ENCODE measurements at regions of chr10 and their contacts with region 1.

Region 1: GRCh38 chr10:94545391-94546048 is at the start of gene HELLS:
- DNase-seq: peak; percentile 88
- H3K4me3 Mint-ChIP-seq: peak within 1 kb of the TSS; percentile 98
- H3K27ac Mint-ChIP-seq: peak within 1 kb of the TSS; percentile 93
- H3K4me1 Mint-ChIP-seq: peaks cover 21% of the 10 kb centered on the region
- H3K27me3 Mint-ChIP-seq: no peaks in the 10 kb centered on the region
- total RNA-seq, gene HELLS: 135 to 141 TPM

Region 2: DNA sequence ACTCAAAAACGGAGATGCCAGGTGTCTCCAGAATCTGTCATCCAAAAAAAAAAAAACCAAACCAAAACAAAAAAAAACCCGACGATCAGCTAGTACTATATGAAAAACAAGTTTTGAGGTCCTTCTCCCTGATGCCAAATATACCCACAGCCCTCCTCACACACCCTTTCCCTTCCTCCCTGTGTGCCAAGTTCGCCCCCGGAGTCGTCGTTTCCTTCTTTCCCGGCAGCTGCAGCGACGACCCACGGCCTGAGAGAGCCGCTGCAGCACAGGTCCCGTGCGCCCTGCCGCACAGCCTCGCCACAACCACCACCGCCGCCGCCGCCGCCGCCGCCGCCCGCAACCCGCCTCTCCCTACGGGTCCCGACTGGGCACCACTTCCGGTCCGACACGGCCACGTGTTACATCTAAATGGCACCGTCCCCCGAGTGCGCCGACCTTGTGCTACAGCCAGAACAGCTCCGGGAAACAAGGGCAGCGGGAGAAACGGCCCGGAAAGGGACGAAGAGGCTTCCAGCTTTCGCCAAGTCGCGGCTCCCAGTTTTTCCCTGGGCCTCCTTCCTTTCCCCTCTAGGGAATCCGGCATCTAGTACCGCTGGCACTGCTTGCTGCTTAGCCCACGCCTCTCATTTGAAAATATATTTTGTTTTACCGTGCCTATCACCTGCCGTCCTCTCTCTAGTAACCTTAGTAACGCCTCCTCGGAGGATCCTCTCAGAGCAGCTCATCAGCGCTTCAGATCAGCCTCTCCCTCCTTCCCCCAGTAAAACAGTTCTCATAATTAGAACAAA is 843.1 kb before region 1 on chr10 and contains the start of gene FRA10AC1:
- CTCF ChIA-PET with region 1: interaction called, 3 read pairs
- POLR2A ChIA-PET with region 1: no interaction called
- intact Hi-C with region 1: loop called (anchors 2 kb)
- DNase-seq: peak; percentile 92
- H3K4me3 Mint-ChIP-seq: no peak within 1 kb of the TSS
- H3K27ac Mint-ChIP-seq: no peak within 1 kb of the TSS
- H3K4me1 Mint-ChIP-seq: peaks cover 15% of the 10 kb centered on the region
- H3K27me3 Mint-ChIP-seq: no peaks in the 10 kb centered on the region
- total RNA-seq, gene FRA10AC1: 18.6 to 19.0 TPM

Region 3: GRCh38 chr10:94362360-94363250 is 182.9 kb before region 1 on chr10 and contains the start of gene NOC3L:
- CTCF ChIA-PET with region 1: interaction called, 6 read pairs
- POLR2A ChIA-PET with region 1: interaction called, 4 read pairs
- intact Hi-C with region 1: loop called (anchors 1 kb)
- DNase-seq: peak; percentile 96
- H3K4me3 Mint-ChIP-seq: peak within 1 kb of the TSS; percentile 88
- H3K27ac Mint-ChIP-seq: peak within 1 kb of the TSS; percentile 89
- H3K4me1 Mint-ChIP-seq: peaks cover 33% of the 10 kb centered on the region
- H3K27me3 Mint-ChIP-seq: peaks cover 6% of the 10 kb centered on the region
- total RNA-seq, gene NOC3L: 37.6 to 39.2 TPM

Region 4: GRCh38 chr10:94591461-94592205 is 46.1 kb after region 1 on chr10:
- CTCF ChIA-PET with region 1: no interaction called
- POLR2A ChIA-PET with region 1: no interaction called
- intact Hi-C with region 1: loop called (anchors 2 kb)
- DNase-seq: no peak
- H3K4me3 Mint-ChIP-seq: no peak overlapping the region
- H3K27ac Mint-ChIP-seq: peak overlapping the region; percentile 84
- H3K4me1 Mint-ChIP-seq: peaks cover 23% of the 10 kb centered on the region
- H3K27me3 Mint-ChIP-seq: no peaks in the 10 kb centered on the region

Region 5: DNA sequence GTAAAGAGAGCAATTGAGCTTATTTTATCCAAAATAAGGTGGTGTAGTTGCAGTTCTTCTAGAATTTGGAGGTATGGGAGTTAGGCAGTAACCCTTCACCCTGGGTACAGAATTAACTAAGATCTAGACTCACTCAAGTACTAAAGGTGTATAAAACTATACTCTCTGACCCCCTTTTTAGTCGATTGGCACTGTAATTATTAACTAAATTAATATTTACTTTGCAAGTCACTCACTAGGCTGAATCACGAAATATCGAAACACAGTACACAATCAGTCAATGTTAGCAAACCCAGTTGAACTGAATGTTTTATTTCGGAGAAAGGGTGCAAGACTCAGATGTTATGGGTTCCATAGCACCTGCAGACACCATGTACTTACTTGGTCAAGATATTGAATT is 202.3 kb after region 1 on chr10:
- CTCF ChIA-PET with region 1: no interaction called
- POLR2A ChIA-PET with region 1: no interaction called
- intact Hi-C with region 1: no loop called
- DNase-seq: no peak
- H3K4me3 Mint-ChIP-seq: no peak overlapping the region
- H3K27ac Mint-ChIP-seq: no peak overlapping the region
- H3K4me1 Mint-ChIP-seq: no peaks in the 10 kb centered on the region
- H3K27me3 Mint-ChIP-seq: no peaks in the 10 kb centered on the region

Region 6: DNA sequence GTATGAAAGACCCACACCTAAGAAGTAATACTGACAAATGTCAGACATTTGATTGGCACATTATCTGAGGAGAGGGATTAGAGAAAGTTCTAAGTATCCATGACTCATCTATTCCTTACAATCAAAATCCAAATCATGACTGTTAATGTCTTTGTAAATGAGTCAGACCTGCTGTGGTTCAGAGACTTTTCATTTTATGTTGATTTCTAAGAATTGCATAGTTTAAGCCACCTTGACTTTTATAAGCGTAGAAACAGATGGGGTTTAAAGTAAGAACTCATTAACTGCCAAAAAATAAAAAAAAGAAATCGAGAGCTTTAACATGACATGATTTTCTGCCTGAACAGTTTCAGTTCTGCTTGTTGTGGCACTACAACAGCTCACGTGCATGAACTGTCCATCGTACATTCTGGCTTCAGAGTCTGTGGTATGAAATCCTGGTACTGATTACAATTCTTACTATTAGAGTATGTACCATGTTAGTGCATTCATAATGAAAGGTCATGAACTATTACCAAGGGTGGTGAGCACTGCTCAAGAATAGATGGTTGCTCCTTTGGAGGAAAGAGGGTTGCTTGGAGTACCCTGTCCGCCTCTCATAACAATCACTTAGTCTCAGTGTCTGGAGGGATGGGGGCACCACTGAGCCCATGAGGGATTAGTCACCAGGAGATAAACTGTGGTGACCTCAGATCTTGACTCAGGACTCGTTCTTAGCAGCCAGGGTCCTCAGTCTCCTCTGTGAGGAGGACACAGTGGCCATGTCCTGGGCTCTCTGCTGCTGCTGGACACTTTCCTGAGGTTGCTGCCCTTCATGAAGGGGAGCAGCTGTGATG is 690.8 kb after region 1 on chr10:
- CTCF ChIA-PET with region 1: no interaction called
- POLR2A ChIA-PET with region 1: no interaction called
- intact Hi-C with region 1: loop called (anchors 5 kb)
- DNase-seq: peak; percentile 38
- H3K4me3 Mint-ChIP-seq: peak overlapping the region; percentile 16
- H3K27ac Mint-ChIP-seq: peak overlapping the region; percentile 88
- H3K4me1 Mint-ChIP-seq: peaks cover 27% of the 10 kb centered on the region
- H3K27me3 Mint-ChIP-seq: peaks cover 12% of the 10 kb centered on the region

Measured in activated CD4-positive, alpha-beta memory T cell treated with anti-CD3 and anti-CD28 coated beads for 36 hours (primary cell).